HepG2 (cell line): ENCODE measurements at regions of chr17 and their contacts with region 1.

Region 1: GRCh38 chr17:50853015-50853615 is 13.0 kb downstream of the TOB1 start:
- DNase-seq: peak; percentile 74
- ATAC-seq: peak; percentile 46
- H3K4me3 ChIP-seq: peak overlapping the region; percentile 29 to 64 (median 56); a peak in 5 of 6 replicates
- H3K27ac ChIP-seq: peak overlapping the region; percentile 49
- H3K4me1 ChIP-seq: peaks cover 76% of the 10 kb centered on the region
- H3K27me3 ChIP-seq: peaks cover 0 to 8% of the 10 kb centered on the region in 2 experiments; a peak in 2 of 5 replicates
- CTCF ChIP-seq: no peak
- EP300 ChIP-seq: peak in 1 of 2 experiments; percentile 77; a peak in 2 of 4 replicates
- POLR2A ChIP-seq: no peak
- RAD21 ChIP-seq: no peak

Region 2: GRCh38 chr17:50816771-50817751 is 36.1 kb before region 1 on chr17:
- CTCF ChIA-PET with region 1: no interaction called
- POLR2A ChIA-PET with region 1: no interaction called
- in situ Hi-C with region 1: no loop called
- intact Hi-C with region 1: no loop called
- DNase-seq: no peak
- ATAC-seq: peak; percentile 78
- H3K4me3 ChIP-seq: peak overlapping the region in 1 of 3 experiments; percentile 50; a peak in 2 of 6 replicates
- H3K27ac ChIP-seq: no peak overlapping the region
- H3K4me1 ChIP-seq: peaks cover 27% of the 10 kb centered on the region
- H3K27me3 ChIP-seq: peaks cover 0 to 33% of the 10 kb centered on the region in 2 experiments; a peak in 4 of 5 replicates
- CTCF ChIP-seq: peak; percentile 92
- EP300 ChIP-seq: no peak
- POLR2A ChIP-seq: no peak
- RAD21 ChIP-seq: peak; percentile 71

Region 3: GRCh38 chr17:50893183-50893993 is 40.3 kb after region 1 on chr17:
- CTCF ChIA-PET with region 1: no interaction called
- POLR2A ChIA-PET with region 1: interaction called, 16 read pairs
- in situ Hi-C with region 1: no loop called
- intact Hi-C with region 1: no loop called
- DNase-seq: peak; percentile 90
- ATAC-seq: peak; percentile 51
- H3K4me3 ChIP-seq: peak overlapping the region; percentile 52 to 72 (median 62)
- H3K27ac ChIP-seq: peak overlapping the region; percentile 84
- H3K4me1 ChIP-seq: peaks cover 81% of the 10 kb centered on the region
- H3K27me3 ChIP-seq: no peaks in the 10 kb centered on the region
- CTCF ChIP-seq: no peak
- EP300 ChIP-seq: peak in 1 of 2 experiments; percentile 86; a peak in 2 of 4 replicates
- POLR2A ChIP-seq: peak in 1 of 2 experiments; percentile 51; a peak in 2 of 4 replicates
- RAD21 ChIP-seq: no peak

Region 4: DNA sequence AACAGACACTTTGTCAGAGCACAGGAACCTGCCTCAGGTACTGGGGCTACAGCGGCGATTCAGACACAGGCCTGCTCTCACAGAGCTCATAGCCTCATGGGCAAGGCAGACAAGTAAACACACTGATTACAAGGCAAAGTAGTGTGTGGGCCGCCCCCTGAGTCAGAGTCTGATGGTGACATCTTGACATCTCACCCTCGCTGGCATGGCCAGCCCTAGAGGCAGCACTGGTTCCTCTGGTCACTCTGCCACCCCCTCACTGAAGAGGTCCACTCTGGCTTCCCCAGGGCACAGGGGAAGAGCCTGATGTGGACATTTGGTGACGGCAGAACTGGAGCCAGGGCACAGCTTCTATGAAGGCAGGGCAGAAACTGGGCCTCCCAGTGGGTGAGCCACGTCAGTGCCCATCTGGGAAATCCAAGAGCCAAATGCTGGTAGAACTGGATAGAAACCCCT is 45.9 kb after region 1 on chr17:
- CTCF ChIA-PET with region 1: no interaction called
- POLR2A ChIA-PET with region 1: interaction called, 33 read pairs
- in situ Hi-C with region 1: no loop called
- intact Hi-C with region 1: no loop called
- DNase-seq: peak; percentile 88
- ATAC-seq: peak; percentile 93
- H3K4me3 ChIP-seq: peak overlapping the region in 1 of 3 experiments; percentile 35; a peak in 3 of 6 replicates
- H3K27ac ChIP-seq: peak overlapping the region; percentile 44
- H3K4me1 ChIP-seq: peaks cover 77% of the 10 kb centered on the region
- H3K27me3 ChIP-seq: no peaks in the 10 kb centered on the region
- CTCF ChIP-seq: peak; percentile 33; the same call in 1 of the 2 replicates
- EP300 ChIP-seq: 0 out of 4 replicates have a peak, but pooled peaks of 1 of the 2 experiments have one; percentile 51
- POLR2A ChIP-seq: no peak
- RAD21 ChIP-seq: no peak

Region 5: GRCh38 chr17:50949989-50950881 is 97.1 kb after region 1 on chr17:
- CTCF ChIA-PET with region 1: interaction called, 23 read pairs
- POLR2A ChIA-PET with region 1: interaction called, 220 read pairs
- in situ Hi-C with region 1: no loop called
- intact Hi-C with region 1: loop called (anchors 1 kb)
- DNase-seq: peak; percentile 65
- ATAC-seq: peak; percentile 81
- H3K4me3 ChIP-seq: peak overlapping the region; percentile 10 to 69 (median 27); a peak in 5 of 6 replicates
- H3K27ac ChIP-seq: peak overlapping the region; percentile 34
- H3K4me1 ChIP-seq: peaks cover 85% of the 10 kb centered on the region
- H3K27me3 ChIP-seq: no peaks in the 10 kb centered on the region
- CTCF ChIP-seq: peak; percentile 100
- EP300 ChIP-seq: no peak
- POLR2A ChIP-seq: no peak
- RAD21 ChIP-seq: peak; percentile 100

Region 6: DNA sequence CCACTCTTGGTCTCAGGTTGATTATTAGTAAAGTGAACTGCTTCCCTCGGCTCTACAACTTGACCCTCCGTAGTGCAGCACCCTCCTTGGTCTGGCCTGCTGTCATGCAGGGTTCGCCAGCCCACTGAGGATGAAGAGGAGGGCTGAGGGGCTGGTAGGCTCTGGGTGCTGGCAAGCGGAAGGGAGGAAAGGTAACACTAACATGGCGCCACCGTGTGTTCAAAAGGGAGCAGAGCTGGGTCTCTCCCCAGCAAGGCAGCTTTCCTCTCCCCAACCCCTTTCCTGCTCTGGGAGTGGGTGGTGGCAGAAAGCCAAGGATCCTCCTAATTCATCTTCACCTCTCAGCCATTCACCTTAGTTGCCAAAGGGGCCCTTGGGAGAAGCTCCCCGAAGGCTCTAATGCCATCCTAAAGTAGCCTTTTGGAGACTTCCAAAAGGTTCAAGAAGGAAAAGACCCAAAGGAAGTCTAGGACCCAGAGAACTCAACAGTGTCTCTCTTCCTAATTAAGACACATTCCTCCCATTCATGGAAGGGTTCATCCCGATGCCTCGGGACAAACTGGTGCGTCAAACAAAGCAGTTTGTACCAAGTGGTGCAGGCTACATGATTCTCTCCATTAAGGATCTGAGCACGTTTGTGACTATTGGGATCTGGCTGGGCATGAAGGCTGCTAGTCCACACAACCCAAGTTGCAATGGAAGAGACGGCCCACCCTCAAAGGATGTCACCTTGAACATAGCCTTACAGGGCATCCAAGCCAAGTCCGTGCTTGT is 103.8 kb after region 1 on chr17:
- CTCF ChIA-PET with region 1: interaction called, 24 read pairs
- POLR2A ChIA-PET with region 1: interaction called, 13 read pairs
- in situ Hi-C with region 1: no loop called
- intact Hi-C with region 1: loop called (anchors 1 kb)
- DNase-seq: peak; percentile 70
- ATAC-seq: peak; percentile 83
- H3K4me3 ChIP-seq: no peak overlapping the region
- H3K27ac ChIP-seq: no peak overlapping the region
- H3K4me1 ChIP-seq: peaks cover 43% of the 10 kb centered on the region
- H3K27me3 ChIP-seq: no peaks in the 10 kb centered on the region
- CTCF ChIP-seq: peak; percentile 96
- EP300 ChIP-seq: no peak
- POLR2A ChIP-seq: peak in 1 of 2 experiments; percentile 11; a peak in 1 of 4 replicates
- RAD21 ChIP-seq: peak; percentile 93